Ascending aorta (tissue), 2 donors: ENCODE measurements at regions of chr7 and their contacts with region 1.

Region 1: GRCh38 chr7:42931834-42932651 is at the starts of genes MRPL32 and PSMA2:
- DNase-seq: peak; percentile 87 to 98
- H3K4me3 ChIP-seq: peak within 1 kb of the TSS; percentile 89 to 94
- H3K27ac ChIP-seq: peak within 1 kb of the TSS; percentile 78 to 87
- H3K4me1 ChIP-seq: peaks cover 4 to 25% of the 10 kb centered on the region in 2 donors
- H3K27me3 ChIP-seq: no peaks in the 10 kb centered on the region
- CTCF ChIP-seq: no peak
- total RNA-seq, gene MRPL32: 24.3 TPM
- total RNA-seq, gene PSMA2: 61.4 TPM

Region 2: GRCh38 chr7:42911454-42912447 is 20.3 kb before region 1 on chr7 and contains the start of gene C7orf25:
- intact Hi-C with region 1: loop called (anchors 1 kb)
- DNase-seq: peak; percentile 85 to 97
- H3K4me3 ChIP-seq: peak within 1 kb of the TSS; percentile 82 to 87
- H3K27ac ChIP-seq: peak within 1 kb of the TSS; percentile 70 to 72
- H3K4me1 ChIP-seq: peaks cover 7% of the 10 kb centered on the region in 2 donors
- H3K27me3 ChIP-seq: no peaks in the 10 kb centered on the region
- CTCF ChIP-seq: no peak
- total RNA-seq, gene C7orf25: 0.75 TPM

Region 3: DNA sequence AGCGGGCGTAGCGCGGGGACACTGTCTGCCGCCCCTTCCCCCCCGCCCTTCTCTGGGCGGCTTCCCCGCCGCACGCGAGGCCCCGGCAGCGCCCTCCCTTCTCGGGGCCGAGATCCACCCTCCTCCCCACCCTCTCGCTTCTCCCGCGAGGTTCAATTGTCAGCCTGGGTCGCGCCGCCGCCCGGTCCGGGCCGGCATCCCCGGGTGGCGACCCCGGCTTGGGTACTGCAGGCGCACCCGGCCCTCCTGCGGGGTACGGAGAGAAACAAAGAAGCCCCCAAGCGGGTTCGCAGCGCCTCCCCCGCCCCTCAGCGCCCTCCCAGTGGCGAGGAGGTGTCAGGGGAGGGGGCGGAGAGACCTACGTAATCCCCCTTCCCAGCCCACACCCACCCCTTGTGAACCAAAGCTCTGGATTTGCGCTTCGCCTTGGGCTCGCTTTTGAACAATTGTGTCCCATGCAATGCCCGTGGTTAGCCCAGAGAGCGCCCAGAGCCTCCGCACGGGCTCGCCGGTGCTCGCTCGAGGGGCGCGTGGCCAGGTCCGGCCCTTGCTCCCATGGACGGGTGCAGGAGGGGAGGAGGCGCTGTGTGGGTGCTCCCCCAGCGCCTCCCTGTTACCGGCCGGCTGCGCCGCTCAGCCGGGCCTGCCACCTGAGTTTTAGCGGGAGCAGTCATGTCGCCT is 181.0 kb after region 1 on chr7:
- intact Hi-C with region 1: loop called (anchors 5 kb)
- DNase-seq: no peak
- H3K4me3 ChIP-seq: peak overlapping the region; percentile 52 to 66
- H3K27ac ChIP-seq: no peak overlapping the region
- H3K4me1 ChIP-seq: peaks cover 11% of the 10 kb centered on the region in 2 donors
- H3K27me3 ChIP-seq: peaks cover 12% of the 10 kb centered on the region
- CTCF ChIP-seq: no peak

Region 4: GRCh38 chr7:43124388-43124787 is 192.3 kb after region 1 on chr7:
- intact Hi-C with region 1: no loop called
- DNase-seq: no peak
- H3K4me3 ChIP-seq: no peak overlapping the region
- H3K27ac ChIP-seq: no peak overlapping the region
- H3K4me1 ChIP-seq: no peaks in the 10 kb centered on the region
- H3K27me3 ChIP-seq: no peaks in the 10 kb centered on the region
- CTCF ChIP-seq: no peak

Region 5: GRCh38 chr7:43729214-43729923 is 797.3 kb after region 1 on chr7 and contains the start of gene COA1:
- intact Hi-C with region 1: loop called (anchors 10 kb)
- DNase-seq: peak; percentile 46 to 92
- H3K4me3 ChIP-seq: peak within 1 kb of the TSS; percentile 73 to 82
- H3K27ac ChIP-seq: peak within 1 kb of the TSS; percentile 69 to 88
- H3K4me1 ChIP-seq: peaks cover 9 to 10% of the 10 kb centered on the region in 2 donors
- H3K27me3 ChIP-seq: no peaks in the 10 kb centered on the region
- CTCF ChIP-seq: peak in 2 of 3 experiments; percentile 13 to 17
- total RNA-seq, gene COA1: 16.3 TPM